ENCODE measurements at regions of chr10 and their contacts with region 1.

Region 1: GRCh38 chr10:38010119-38010903 is at the start of gene ZNF33A:
- DNase-seq: peak; percentile 52
- H3K4me3 ChIP-seq: peak within 1 kb of the TSS; percentile 61
- H3K27me3 ChIP-seq: no peaks in the 10 kb centered on the region
- CTCF ChIP-seq: peak; percentile 20; the same call in 1 of the 2 replicates
- polyA plus RNA-seq, gene ZNF33A: 3.9 and 7.7 TPM in 2 replicates

Region 2: DNA sequence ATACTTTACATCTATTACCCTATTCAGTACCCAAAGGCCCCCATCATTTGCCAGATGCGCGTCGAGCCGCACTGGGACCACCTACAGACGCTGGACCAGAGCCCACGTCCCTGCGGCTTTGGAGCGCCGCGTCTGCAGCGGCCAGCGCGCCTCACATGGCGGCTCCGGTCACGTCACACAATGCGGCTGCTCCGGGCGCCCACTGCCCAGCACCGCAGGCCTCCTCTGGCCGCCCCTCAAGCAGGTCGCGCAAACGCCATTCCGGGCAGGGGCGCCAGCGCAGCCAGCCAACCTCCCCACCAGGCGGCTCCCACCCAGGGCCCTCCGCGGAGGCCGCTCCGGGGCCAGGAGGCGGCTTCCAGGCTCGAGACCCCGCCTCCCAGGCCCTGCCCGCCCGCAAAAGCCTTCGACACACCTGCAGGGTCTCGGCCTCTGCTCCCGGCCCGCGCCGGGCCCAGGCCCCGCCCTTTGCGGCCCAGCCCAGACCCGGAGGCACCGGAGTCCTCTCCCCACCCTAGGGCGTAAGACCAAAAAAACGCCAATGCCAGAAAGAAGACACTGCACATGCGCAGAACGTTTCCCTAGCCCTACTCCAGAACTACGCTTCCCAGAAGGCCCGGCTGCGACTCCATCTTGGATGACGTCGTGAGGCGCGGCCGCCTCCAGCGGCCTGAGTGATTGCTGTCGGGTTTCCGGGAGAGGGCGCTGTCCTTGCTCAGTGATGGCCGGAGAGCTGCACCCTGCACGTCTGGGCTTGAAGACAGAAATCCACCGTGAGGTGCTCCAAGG is 34.0 kb before region 1 on chr10 and contains the start of gene ZNF25:
- CTCF ChIA-PET with region 1: interaction called, 6 read pairs
- POLR2A ChIA-PET with region 1: interaction called, 27 read pairs
- DNase-seq: peak; percentile 88
- H3K4me3 ChIP-seq: peak within 1 kb of the TSS; percentile 80
- H3K27me3 ChIP-seq: no peaks in the 10 kb centered on the region
- CTCF ChIP-seq: peak; percentile 99
- polyA plus RNA-seq, gene ZNF25: 5.0 and 9.2 TPM in 2 replicates

Measured in BJ (cell line).